ENCODE measurements at regions of chr5 and their contacts with region 1.

Region 1: DNA sequence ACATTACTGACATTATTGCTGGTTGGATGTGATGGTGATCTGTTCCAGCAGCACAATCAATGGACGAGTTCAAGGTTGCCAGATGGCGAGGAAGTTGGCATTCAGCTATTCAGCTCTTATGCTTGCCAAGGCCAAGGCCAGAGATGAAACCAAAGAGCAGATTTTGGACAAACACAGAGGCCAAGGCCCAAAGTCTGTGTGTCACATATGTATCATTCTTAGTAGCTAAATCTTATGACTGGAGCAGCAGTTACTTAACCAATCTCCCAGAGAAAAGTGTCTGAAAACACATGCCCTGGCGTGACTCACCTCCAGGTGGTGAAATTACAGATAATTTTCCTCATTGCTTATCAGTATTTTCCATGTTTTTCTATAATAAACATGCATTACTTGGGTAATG is 189.0 kb upstream of the EGFLAM start:
- DNase-seq: no peak
- ATAC-seq: no peak
- H3K4me3 ChIP-seq: no peak overlapping the region
- H3K27ac ChIP-seq: no peak overlapping the region
- H3K4me1 ChIP-seq: no peaks in the 10 kb centered on the region
- H3K27me3 ChIP-seq: peaks cover 54% of the 10 kb centered on the region
- CTCF ChIP-seq: no peak

Region 2: GRCh38 chr5:38135486-38136039 is 66.2 kb after region 1 on chr5:
- CTCF ChIA-PET with region 1: no interaction called
- POLR2A ChIA-PET with region 1: interaction called, 12 read pairs
- intact Hi-C with region 1: no loop called
- DNase-seq: no peak
- ATAC-seq: no peak
- H3K4me3 ChIP-seq: no peak overlapping the region
- H3K27ac ChIP-seq: no peak overlapping the region
- H3K4me1 ChIP-seq: no peaks in the 10 kb centered on the region
- H3K27me3 ChIP-seq: peaks cover 94% of the 10 kb centered on the region
- CTCF ChIP-seq: no peak

Measured in PC-3 (cell line).